Right ventricle myocardium inferior (tissue), 1 donor: ENCODE measurements at regions of chr9 and their contacts with region 1.

Region 1: DNA sequence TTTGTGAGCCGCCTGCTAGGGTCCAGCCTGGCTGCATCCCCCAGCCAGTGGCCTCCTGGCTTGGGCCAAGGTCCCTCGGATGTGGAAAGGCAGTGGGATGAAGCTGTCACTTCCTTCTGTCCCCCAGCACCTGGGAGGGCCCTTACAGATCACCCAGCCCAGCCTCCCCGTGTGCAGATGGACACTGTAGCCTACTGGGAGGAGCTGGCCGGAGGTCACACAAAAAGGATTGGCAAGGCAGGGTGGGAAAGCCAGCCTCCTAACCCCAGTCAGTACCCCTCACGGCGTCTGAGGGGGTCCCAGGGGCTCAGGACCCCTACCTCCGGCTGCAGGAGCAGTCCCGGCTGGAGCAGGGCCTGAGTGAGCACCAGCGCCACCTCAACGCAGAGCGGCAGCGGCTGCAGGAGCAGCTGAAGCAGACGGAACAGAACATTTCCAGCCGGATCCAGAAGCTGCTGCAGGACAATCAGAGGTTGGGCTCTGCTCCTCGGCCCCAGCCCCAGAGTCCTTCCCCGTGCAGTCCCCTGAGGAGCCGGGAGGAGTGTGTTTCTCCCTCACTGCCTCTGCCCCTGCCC is 28.3 kb downstream of the LRSAM1 start:
- DNase-seq: no peak
- ATAC-seq: no peak

Region 2: DNA sequence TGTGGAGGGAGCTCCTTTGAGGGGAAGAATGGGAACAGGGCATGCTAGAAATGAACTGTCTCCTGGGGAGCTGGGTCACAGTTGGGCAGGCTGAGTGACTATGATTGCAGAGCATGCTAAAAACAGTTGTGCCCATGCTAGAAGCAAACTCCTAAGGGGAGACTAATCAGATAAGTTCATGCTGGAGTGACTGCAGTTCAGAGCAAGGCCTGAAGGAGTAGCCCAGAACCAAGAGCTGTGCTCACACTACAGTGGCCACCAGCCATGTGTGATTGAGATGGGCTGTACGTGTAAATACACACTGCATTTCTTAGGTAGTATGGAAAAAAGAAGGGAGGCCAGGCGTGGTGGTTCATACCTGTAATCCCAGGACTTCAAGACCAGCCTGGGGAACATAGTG is 408.2 kb after region 1 on chr9:
- intact Hi-C with region 1: loop called (anchors 5 kb)
- DNase-seq: no peak
- ATAC-seq: no peak